A673 (cell line): ENCODE measurements at regions of chr17 and their contacts with region 1.

Region 1: DNA sequence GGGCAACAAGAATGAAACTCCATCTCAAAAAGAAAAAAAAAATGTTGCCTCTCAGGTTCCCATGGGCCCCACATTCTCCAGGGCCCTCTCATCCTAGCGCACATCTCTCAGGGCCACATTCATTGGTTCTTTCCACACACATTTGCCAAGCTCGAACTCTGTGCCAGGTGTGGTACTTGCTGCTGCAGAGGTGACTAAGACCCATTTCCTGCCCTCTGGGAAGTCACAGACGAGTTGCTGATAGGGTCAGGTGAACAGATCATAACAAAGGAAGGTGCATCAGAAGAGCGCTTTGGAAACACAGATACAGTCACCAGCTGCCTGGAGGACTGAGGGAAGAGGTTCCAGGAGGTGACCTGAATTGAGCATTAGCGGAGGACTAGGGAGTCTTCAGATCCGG is 1.0 kb downstream of the GSDMA start:
- DNase-seq: no peak
- H3K4me3 ChIP-seq: no peak overlapping the region
- H3K27ac ChIP-seq: no peak overlapping the region
- H3K4me1 ChIP-seq: no peaks in the 10 kb centered on the region
- H3K27me3 ChIP-seq: no peaks in the 10 kb centered on the region
- CTCF ChIP-seq: no peak

Region 2: DNA sequence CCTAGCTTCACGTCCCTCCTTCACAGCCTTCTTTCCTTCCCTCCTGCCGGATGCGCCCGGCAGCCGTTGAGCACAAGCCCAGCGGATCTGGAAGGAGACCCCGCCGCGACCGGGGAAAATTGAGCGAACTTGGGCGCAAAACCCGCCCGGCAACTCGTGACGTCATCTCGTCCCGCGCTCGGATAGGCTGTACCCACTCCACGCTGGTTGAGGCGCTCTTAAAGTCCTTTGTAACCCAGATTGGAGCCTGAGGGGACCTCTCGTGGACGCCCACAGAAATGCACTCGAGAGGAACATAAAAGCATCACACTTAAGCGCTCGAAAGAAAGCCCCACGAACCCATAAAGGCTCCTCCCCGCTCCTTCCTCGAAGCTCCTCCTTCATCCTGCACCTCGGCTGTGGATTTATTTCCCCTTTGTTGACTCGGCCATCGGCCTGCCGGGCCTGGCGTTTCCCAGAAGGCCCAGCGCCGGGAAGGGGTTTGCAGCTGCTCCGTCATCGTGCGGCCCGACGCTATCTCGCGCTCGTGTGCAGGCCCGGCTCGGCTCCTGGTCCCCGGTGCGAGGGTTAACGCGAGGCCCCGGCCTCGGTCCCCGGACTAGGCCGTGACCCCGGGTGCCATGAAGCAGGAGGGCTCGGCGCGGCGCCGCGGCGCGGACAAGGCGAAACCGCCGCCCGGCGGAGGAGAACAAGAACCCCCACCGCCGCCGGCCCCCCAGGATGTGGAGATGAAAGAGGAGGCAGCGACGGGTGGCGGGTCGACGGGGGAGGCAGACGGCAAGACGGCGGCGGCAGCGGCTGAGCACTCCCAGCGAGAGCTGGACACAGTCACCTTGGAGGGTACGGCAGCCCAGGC is 16.8 kb after region 1 on chr17 and contains the start of gene PSMD3:
- CTCF ChIA-PET with region 1: interaction called, 7 read pairs
- POLR2A ChIA-PET with region 1: no interaction called
- intact Hi-C with region 1: loop called (anchors 1 kb)
- DNase-seq: peak; percentile 98
- H3K4me3 ChIP-seq: peak within 1 kb of the TSS; percentile 80
- H3K27ac ChIP-seq: peak within 1 kb of the TSS; percentile 97
- H3K4me1 ChIP-seq: no peaks in the 10 kb centered on the region
- H3K27me3 ChIP-seq: no peaks in the 10 kb centered on the region
- CTCF ChIP-seq: peak; percentile 63
- total RNA-seq, gene PSMD3: 161 and 168 TPM in 2 replicates